Sigmoid colon (tissue), 7 donors: ENCODE measurements at regions of chr6 and their contacts with region 1.

Region 1: GRCh38 chr6:112502351-112503090 is 155.4 kb downstream of the RFPL4B start:
- DNase-seq: no peak
- H3K4me3 ChIP-seq: peak overlapping the region in 1 of 4 donors; percentile 1
- H3K27ac ChIP-seq: no peak overlapping the region
- H3K4me1 ChIP-seq: peaks cover 0 to 17% (median 12%) of the 10 kb centered on the region in 4 donors
- H3K27me3 ChIP-seq: no peaks in the 10 kb centered on the region
- CTCF ChIP-seq: peak in 1 of 4 experiments; percentile 41
- EP300 ChIP-seq: no peak
- POLR2A ChIP-seq: no peak

Region 2: GRCh38 chr6:111985202-111985731 is 517.3 kb before region 1 on chr6:
- intact Hi-C with region 1: no loop called
- DNase-seq: no peak
- H3K4me3 ChIP-seq: no peak overlapping the region
- H3K27ac ChIP-seq: no peak overlapping the region
- H3K4me1 ChIP-seq: no peaks in the 10 kb centered on the region
- H3K27me3 ChIP-seq: no peaks in the 10 kb centered on the region
- CTCF ChIP-seq: no peak
- EP300 ChIP-seq: no peak
- POLR2A ChIP-seq: no peak

Region 3: DNA sequence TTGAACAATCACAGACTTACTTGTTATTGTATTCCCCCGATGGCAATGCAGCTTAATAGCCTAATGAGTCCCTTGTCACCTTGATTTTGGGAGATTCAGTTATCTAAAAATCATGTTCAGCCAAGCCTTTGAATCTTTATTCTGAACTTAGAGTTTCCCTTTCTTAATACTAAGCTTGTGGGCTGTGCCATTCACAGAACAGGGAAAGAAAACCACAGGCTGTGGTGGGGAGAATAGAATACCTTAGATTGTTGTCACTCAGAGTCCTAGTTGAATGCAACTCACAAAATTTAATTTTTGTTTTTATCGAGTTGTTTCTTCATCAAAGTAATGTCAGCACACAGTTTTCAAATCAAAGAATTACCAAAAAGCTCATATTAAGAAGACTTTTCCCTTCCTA is 118.0 kb before region 1 on chr6:
- intact Hi-C with region 1: no loop called
- DNase-seq: no peak
- H3K4me3 ChIP-seq: no peak overlapping the region
- H3K27ac ChIP-seq: no peak overlapping the region
- H3K4me1 ChIP-seq: no peaks in the 10 kb centered on the region
- H3K27me3 ChIP-seq: no peaks in the 10 kb centered on the region
- CTCF ChIP-seq: no peak
- EP300 ChIP-seq: no peak
- POLR2A ChIP-seq: no peak

Region 4: DNA sequence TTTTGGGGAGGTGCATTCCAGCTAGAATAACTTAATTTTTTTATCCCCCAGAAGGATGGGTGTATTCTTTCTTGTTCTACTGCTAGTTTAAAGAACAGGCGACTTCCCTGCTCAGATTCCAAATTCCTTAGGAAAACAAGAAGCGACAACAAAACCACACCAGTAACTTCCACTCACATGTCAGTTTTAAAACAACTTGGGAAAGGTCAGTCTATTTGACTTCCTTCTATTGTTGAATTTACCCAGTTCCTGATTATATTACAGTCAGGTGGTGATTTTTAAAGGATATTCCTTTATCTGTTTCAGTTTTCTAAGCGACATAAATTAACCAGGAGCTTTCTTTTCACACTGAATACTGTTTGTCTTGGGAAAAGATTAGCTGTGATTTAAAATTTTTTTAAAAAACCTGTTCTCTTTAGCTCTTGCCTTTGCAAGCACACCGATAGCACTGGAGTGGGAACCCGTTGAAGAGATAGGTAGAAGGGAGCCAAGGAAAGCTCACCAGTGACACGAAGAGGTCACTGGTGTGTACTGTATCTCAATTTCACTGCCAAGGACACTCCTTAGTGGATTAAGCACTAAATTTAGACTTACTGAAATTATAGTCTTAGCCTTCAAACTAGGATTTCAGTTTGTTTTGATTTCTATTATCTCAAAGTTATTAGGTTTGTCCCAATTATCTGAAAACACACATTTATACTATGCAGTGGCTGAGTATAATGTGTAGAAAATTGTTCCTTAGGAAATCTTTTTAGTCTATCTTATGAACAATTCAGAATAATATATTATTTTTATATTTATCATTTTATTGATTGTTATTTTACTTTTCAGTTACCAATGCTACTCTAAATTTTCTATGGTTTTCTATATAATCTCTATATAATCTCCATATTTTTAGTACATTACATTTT is 1376.9 kb after region 1 on chr6:
- intact Hi-C with region 1: loop called (anchors 5 kb)
- DNase-seq: peak; percentile 77
- H3K4me3 ChIP-seq: no peak overlapping the region
- H3K27ac ChIP-seq: peak overlapping the region in 2 of 4 donors; percentile 3 to 32
- H3K4me1 ChIP-seq: peaks cover 0 to 21% (median 9%) of the 10 kb centered on the region in 4 donors
- H3K27me3 ChIP-seq: no peaks in the 10 kb centered on the region
- CTCF ChIP-seq: peak; percentile 56 to 67 (median 61)
- EP300 ChIP-seq: no peak
- POLR2A ChIP-seq: no peak